ENCODE measurements at regions of chr11 and their contacts with region 1.

Region 1: DNA sequence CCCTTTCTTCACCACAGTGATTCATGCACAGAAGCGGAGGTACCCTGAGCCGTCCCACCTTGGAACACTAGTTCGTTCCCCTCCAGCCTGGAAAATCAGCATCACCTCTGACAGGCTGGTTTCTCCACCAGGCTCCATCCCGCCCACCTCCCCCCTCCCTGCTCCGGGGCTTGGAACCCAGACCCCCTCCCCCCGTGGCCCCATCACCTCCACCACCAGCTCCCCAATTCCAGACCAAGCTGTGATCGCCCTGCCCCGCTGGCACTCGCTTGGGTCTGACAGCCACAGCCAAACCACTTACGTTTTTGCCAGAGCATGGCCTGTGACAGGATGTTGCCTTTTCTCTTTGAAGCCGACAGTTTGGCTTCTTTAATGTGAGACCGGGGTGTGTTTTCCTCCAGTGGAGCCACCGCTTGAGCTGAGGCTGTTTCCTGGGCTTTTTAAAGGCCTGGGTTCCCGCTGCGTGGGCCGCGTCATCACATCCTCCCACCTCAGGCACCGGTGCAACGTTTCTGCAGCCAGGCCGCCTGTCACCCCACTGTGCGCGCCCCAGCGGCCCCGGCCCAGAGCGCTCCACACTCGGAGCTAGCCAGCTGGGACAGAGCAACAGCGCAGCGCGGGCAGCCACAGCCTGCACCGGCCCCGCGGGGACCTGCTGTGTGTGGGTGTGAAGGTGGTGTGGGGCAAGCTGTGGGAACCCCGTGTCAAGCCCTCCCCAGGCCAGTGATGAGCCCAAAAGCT is at the start of gene POU2AF1:
- DNase-seq: peak; percentile 93
- ATAC-seq: peak; percentile 73
- H3K4me3 ChIP-seq: peak within 1 kb of the TSS; percentile 66 to 91 (median 89)
- H3K4me3 Mint-ChIP-seq: peak within 1 kb of the TSS; percentile 100
- H3K27ac ChIP-seq: peak within 1 kb of the TSS; percentile 96 to 97
- H3K27ac Mint-ChIP-seq: peak within 1 kb of the TSS; percentile 100
- H3K4me1 ChIP-seq: peaks cover 71 to 72% of the 10 kb centered on the region in 2 donors
- H3K4me1 Mint-ChIP-seq: peaks cover 72% of the 10 kb centered on the region
- H3K27me3 ChIP-seq: no peaks in the 10 kb centered on the region
- H3K27me3 Mint-ChIP-seq: no peaks in the 10 kb centered on the region
- CTCF ChIP-seq: no peak
- total RNA-seq, gene POU2AF1: 404 and 407 TPM in 2 replicates

Region 2: GRCh38 chr11:110429731-110430266 is 949.2 kb before region 1 on chr11 and contains the start of gene FDX1:
- CTCF ChIA-PET with region 1: no interaction called
- POLR2A ChIA-PET with region 1: no interaction called
- intact Hi-C with region 1: loop called (anchors 2 kb)
- DNase-seq: peak; percentile 91
- ATAC-seq: peak; percentile 87
- H3K4me3 ChIP-seq: peak within 1 kb of the TSS; percentile 74 to 91 (median 80)
- H3K4me3 Mint-ChIP-seq: peak within 1 kb of the TSS; percentile 98
- H3K27ac ChIP-seq: peak within 1 kb of the TSS; percentile 63 to 81
- H3K27ac Mint-ChIP-seq: peak within 1 kb of the TSS; percentile 95
- H3K4me1 ChIP-seq: peaks cover 22 to 28% of the 10 kb centered on the region in 2 donors
- H3K4me1 Mint-ChIP-seq: peaks cover 36% of the 10 kb centered on the region
- H3K27me3 ChIP-seq: no peaks in the 10 kb centered on the region
- H3K27me3 Mint-ChIP-seq: no peaks in the 10 kb centered on the region
- CTCF ChIP-seq: peak; percentile 71
- total RNA-seq, gene FDX1: 10.0 and 11.2 TPM in 2 replicates

Region 3: GRCh38 chr11:111177037-111177871 is 201.8 kb before region 1 on chr11:
- CTCF ChIA-PET with region 1: no interaction called
- POLR2A ChIA-PET with region 1: no interaction called
- intact Hi-C with region 1: loop called (anchors 10 kb)
- DNase-seq: peak; percentile 86
- ATAC-seq: peak; percentile 83
- H3K4me3 ChIP-seq: peak overlapping the region in 2 of 5 experiments; percentile 29 to 42
- H3K4me3 Mint-ChIP-seq: peak overlapping the region; percentile 69
- H3K27ac ChIP-seq: peak overlapping the region; percentile 84 to 90
- H3K27ac Mint-ChIP-seq: peak overlapping the region; percentile 95
- H3K4me1 ChIP-seq: peaks cover 62 to 64% of the 10 kb centered on the region in 2 donors
- H3K4me1 Mint-ChIP-seq: peaks cover 67% of the 10 kb centered on the region
- H3K27me3 ChIP-seq: no peaks in the 10 kb centered on the region
- H3K27me3 Mint-ChIP-seq: no peaks in the 10 kb centered on the region
- CTCF ChIP-seq: no peak

Region 4: DNA sequence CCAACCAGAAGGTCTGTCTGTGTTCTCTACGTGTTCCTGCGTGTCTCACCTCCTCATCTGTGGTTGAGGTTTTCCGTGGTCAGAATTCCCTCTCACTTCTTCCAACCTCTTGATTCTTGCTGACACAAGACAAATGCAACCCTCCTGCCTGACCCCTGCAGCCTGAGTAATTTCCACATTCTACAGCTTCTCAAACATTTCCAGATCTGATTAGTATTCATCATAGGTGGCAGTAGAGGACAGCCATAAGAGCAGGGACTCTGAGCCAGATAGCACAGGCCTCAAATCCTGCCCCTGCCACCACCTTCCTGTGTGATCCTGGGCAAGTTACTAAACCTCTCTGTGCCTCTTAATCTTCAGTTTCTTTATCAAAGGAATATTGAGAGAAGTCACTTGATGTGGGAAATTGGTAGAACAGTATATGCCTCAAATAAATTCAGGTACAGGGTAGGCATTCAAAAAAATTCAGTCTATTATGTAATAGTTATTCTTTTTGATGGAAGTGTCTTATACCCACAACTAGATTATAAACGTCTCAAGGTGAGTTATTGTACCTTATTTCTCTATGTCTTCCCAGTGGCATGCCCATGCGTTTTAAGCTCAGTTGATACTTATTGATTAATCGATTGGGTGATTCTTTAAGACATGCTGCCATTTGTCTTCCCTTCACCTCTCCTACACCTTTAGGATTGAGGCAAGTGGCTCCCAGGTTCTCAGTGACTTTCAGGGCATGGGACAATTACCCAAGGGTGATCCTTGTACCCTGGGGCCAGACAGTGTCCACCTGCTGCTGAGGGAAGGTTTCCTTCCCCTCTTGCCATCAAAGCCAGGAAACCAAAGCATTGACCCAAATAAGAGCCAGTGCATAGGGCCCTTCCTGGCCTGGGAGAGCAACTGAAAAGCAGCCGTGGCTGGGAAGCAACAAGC is 19.5 kb before region 1 on chr11:
- CTCF ChIA-PET with region 1: interaction called, 17 read pairs
- POLR2A ChIA-PET with region 1: interaction called, 53 read pairs
- intact Hi-C with region 1: loop called (anchors 1 kb)
- DNase-seq: peak; percentile 46
- ATAC-seq: peak; percentile 29
- H3K4me3 ChIP-seq: no peak overlapping the region
- H3K4me3 Mint-ChIP-seq: no peak overlapping the region
- H3K27ac ChIP-seq: peak overlapping the region in 1 of 2 donors; percentile 71
- H3K27ac Mint-ChIP-seq: peak overlapping the region; percentile 67
- H3K4me1 ChIP-seq: peaks cover 63 to 73% of the 10 kb centered on the region in 2 donors
- H3K4me1 Mint-ChIP-seq: peaks cover 64% of the 10 kb centered on the region
- H3K27me3 ChIP-seq: no peaks in the 10 kb centered on the region
- H3K27me3 Mint-ChIP-seq: no peaks in the 10 kb centered on the region
- CTCF ChIP-seq: no peak

Region 5: DNA sequence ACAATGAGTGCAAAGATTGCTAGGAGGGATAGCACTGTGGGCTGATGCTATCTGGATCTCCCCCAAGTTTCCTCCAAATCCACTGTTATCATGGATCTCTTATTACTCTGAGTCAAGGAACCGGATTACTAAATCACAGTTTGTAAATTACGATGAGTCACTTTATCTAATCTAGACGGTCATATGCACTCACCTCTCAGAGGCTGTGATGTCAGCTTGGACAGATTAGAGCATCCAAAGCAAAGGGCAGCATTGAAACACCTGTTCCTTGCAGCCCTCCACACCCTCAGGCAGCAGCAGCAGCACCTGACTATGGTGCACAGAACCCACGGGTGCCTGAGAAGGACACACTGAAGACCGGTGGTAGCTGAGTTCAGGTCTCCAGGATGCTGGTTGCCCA is 14.1 kb after region 1 on chr11:
- CTCF ChIA-PET with region 1: interaction called, 26 read pairs
- POLR2A ChIA-PET with region 1: interaction called, 54 read pairs
- intact Hi-C with region 1: loop called (anchors 1 kb)
- DNase-seq: no peak
- ATAC-seq: no peak
- H3K4me3 ChIP-seq: no peak overlapping the region
- H3K4me3 Mint-ChIP-seq: no peak overlapping the region
- H3K27ac ChIP-seq: no peak overlapping the region
- H3K27ac Mint-ChIP-seq: peak overlapping the region; percentile 26
- H3K4me1 ChIP-seq: peaks cover 63 to 68% of the 10 kb centered on the region in 2 donors
- H3K4me1 Mint-ChIP-seq: peaks cover 85% of the 10 kb centered on the region
- H3K27me3 ChIP-seq: no peaks in the 10 kb centered on the region
- H3K27me3 Mint-ChIP-seq: no peaks in the 10 kb centered on the region
- CTCF ChIP-seq: no peak

Region 6: GRCh38 chr11:111408789-111409727 is 30.0 kb after region 1 on chr11:
- CTCF ChIA-PET with region 1: interaction called, 922 read pairs
- POLR2A ChIA-PET with region 1: interaction called, 314 read pairs
- intact Hi-C with region 1: no loop called
- DNase-seq: no peak
- ATAC-seq: no peak
- H3K4me3 ChIP-seq: no peak overlapping the region
- H3K4me3 Mint-ChIP-seq: peak overlapping the region; percentile 67
- H3K27ac ChIP-seq: peak overlapping the region; percentile 4 to 60
- H3K27ac Mint-ChIP-seq: peak overlapping the region; percentile 90
- H3K4me1 ChIP-seq: peaks cover 55 to 65% of the 10 kb centered on the region in 2 donors
- H3K4me1 Mint-ChIP-seq: peaks cover 76% of the 10 kb centered on the region
- H3K27me3 ChIP-seq: no peaks in the 10 kb centered on the region
- H3K27me3 Mint-ChIP-seq: no peaks in the 10 kb centered on the region
- CTCF ChIP-seq: no peak

Region 7: DNA sequence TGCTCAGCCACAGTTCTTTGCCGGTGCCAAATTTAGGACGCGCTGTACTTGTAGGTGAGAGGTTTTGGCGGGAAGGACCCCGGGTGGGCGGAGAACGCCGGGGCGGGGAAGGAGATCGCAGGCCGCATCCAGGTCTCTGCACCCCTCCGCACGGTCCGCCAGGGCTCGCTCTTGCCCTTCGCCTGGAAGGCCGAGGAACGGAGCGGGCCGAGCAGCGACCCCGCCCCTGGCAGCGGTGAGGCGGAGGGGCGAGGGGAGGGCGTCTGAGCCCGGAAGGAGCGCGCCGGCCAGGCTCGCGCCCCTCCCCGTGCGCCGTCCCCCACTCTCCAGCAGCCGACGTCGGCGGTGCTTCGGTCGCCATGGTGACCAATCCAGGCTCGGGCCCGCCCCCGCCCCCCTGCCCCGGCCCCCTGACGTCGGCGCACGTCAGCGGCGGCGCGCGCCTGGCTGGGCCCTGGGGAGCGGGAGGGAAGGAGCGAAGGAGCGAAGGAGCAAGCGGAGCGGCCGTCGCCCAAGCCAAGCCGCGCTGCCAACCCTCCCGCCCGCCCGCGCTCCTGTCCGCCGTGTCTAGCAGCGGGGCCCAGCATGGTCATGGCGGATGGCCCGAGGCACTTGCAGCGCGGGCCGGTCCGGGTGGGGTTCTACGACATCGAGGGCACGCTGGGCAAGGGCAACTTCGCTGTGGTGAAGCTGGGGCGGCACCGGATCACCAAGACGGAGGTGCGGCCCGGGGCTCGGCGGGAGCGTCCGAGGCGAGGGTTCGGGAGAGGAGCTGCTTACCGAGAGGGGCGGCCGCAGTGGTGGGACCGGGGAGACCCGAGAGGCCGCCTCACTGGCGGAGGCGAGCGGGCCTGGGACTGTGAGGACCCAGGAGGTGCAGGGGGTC is 223.2 kb after region 1 on chr11 and contains the start of gene SIK2:
- CTCF ChIA-PET with region 1: no interaction called
- POLR2A ChIA-PET with region 1: no interaction called
- intact Hi-C with region 1: loop called (anchors 5 kb)
- DNase-seq: peak; percentile 96
- ATAC-seq: peak; percentile 93
- H3K4me3 ChIP-seq: peak within 1 kb of the TSS; percentile 75 to 96 (median 88)
- H3K4me3 Mint-ChIP-seq: peak within 1 kb of the TSS; percentile 98
- H3K27ac ChIP-seq: peak within 1 kb of the TSS; percentile 84 to 92
- H3K27ac Mint-ChIP-seq: peak within 1 kb of the TSS; percentile 94
- H3K4me1 ChIP-seq: peaks cover 14 to 21% of the 10 kb centered on the region in 2 donors
- H3K4me1 Mint-ChIP-seq: peaks cover 18% of the 10 kb centered on the region
- H3K27me3 ChIP-seq: no peaks in the 10 kb centered on the region
- H3K27me3 Mint-ChIP-seq: no peaks in the 10 kb centered on the region
- CTCF ChIP-seq: peak; percentile 77
- total RNA-seq, gene SIK2: 20.4 and 21.8 TPM in 2 replicates